Activated CD4-positive, alpha-beta T cell treated with anti-CD3 and anti-CD28 coated beads for 36 hours (primary cell): ENCODE measurements at regions of chr6 and their contacts with region 1.

Region 1: GRCh38 chr6:25042036-25042521 is 106.3 kb upstream of the RIPOR2 start:
- DNase-seq: peak; percentile 70
- ATAC-seq: peak; percentile 60
- H3K4me3 Mint-ChIP-seq: peak overlapping the region; percentile 91
- H3K27ac Mint-ChIP-seq: peak overlapping the region; percentile 98
- H3K4me1 Mint-ChIP-seq: peaks cover 69% of the 10 kb centered on the region
- H3K27me3 Mint-ChIP-seq: no peaks in the 10 kb centered on the region

Region 2: DNA sequence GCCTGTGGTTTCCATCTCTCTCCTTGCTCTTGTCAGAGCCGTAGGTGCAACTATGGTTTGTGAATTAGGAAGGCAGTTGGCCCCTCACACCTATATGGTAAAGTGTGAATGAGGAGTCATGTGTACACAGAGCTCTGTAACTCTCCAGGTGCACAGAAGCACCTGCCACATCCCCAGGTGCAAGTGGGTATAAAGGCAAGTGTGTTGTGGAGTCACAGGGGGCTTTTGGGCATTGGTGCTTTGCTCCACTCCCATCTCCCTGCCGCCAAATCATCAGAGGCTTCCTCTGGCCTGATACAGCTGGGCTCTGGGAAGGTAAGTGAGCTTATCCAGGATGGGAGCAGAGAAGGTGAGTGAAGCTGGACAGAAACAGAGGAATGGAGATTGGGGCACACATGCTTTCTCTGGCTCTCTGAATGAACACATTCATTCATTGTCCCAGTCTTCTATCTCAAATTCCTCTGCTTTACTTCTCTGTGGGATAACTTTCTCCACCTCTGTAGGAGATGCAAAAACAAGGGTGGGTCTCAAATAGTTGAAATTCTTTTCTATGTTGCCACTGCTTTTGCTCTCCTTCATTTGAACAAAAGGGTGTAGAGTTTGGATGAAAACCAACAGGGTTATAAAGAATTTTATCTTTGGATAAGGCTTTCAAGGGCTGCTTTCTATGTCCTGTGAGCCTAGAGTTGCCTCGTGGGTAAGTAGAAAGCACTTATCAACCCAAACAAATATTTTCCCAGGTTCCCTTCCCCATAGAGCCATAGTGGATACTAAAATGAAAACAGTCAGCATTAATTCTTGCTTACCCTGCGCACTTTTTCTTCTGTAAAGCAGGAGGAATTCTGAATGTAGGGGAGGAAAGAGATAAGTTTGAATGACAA is 61.3 kb before region 1 on chr6:
- CTCF ChIA-PET with region 1: no interaction called
- POLR2A ChIA-PET with region 1: no interaction called
- intact Hi-C with region 1: no loop called
- DNase-seq: no peak
- ATAC-seq: peak; percentile 71
- H3K4me3 Mint-ChIP-seq: no peak overlapping the region
- H3K27ac Mint-ChIP-seq: no peak overlapping the region
- H3K4me1 Mint-ChIP-seq: peaks cover 56% of the 10 kb centered on the region
- H3K27me3 Mint-ChIP-seq: no peaks in the 10 kb centered on the region

Region 3: DNA sequence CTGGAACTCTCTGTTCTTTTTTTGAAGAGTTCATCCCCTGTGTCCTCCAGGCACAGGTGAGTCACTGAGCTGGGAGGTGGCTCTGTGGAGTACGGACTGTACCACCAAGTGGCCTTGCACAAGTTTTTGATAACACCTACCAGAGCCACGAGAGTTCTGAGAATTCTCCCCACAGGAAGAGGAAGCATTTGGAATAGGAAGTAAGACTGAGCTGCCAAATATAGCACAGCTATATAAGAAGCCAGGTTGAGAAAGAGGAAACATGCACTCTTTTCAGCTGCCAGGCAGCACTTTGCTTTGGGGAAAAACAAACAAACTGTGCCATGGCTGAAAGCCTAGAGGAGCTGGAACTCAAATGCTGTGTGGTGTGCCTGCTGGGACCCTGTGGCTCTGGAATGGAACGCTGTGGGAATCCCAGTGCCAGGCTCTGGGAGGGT is 35.5 kb before region 1 on chr6:
- CTCF ChIA-PET with region 1: no interaction called
- POLR2A ChIA-PET with region 1: no interaction called
- intact Hi-C with region 1: loop called in 1 of 2 experiments (anchors 1 kb)
- DNase-seq: peak; percentile 62
- ATAC-seq: peak; percentile 58
- H3K4me3 Mint-ChIP-seq: peak overlapping the region; percentile 32
- H3K27ac Mint-ChIP-seq: peak overlapping the region; percentile 79
- H3K4me1 Mint-ChIP-seq: peaks cover 83% of the 10 kb centered on the region
- H3K27me3 Mint-ChIP-seq: no peaks in the 10 kb centered on the region

Region 4: GRCh38 chr6:25053875-25054371 is 11.8 kb after region 1 on chr6:
- CTCF ChIA-PET with region 1: interaction called, 21 read pairs
- POLR2A ChIA-PET with region 1: no interaction called
- intact Hi-C with region 1: loop called (anchors 1 kb)
- DNase-seq: peak; percentile 32
- ATAC-seq: peak; percentile 33
- H3K4me3 Mint-ChIP-seq: no peak overlapping the region
- H3K27ac Mint-ChIP-seq: peak overlapping the region; percentile 59
- H3K4me1 Mint-ChIP-seq: peaks cover 73% of the 10 kb centered on the region
- H3K27me3 Mint-ChIP-seq: no peaks in the 10 kb centered on the region